Activated CD4-positive, alpha-beta T cell treated with anti-CD3 and anti-CD28 coated beads, Interleukin-2, amount 10 ng/mL, durations not matched to agents 7 days and 5 days (primary cell): ENCODE measurements at regions of chr11 and their contacts with region 1.

Region 1: DNA sequence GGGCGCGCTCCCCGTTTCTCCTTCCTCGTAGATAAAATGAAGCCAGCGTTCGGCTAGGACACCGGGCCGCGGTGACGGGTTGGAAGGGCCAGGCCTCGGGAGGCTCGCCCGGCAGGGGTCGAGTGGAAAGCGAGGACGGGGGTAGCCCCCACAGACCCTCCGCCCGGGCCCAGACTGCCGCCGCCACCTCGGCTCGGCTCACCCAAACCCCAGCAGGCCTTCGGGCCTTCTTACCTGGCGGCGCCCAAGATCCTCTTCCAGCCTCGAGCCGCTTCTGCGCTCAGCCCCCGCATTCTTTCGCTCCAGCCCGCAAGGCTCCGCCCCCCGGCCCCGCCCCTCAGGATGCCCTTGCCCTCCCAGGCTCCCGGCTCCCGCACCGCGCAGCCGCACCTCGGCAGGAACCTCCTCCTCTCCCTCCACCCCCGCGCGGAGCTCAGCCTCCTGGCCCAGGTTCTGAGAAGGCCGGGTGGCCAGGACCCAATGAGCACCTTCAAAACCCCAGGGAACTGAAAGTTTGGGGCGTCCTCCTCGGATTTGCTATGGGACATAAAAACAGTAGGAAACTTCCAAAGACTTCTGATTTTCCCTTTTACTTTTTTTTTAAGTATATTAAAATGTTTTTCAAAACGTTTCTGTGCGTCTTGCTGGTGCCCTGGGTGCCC is at the start of gene CD59:
- DNase-seq: peak; percentile 84
- H3K4me3 Mint-ChIP-seq: peak within 1 kb of the TSS; percentile 83
- H3K27ac Mint-ChIP-seq: peak within 1 kb of the TSS; percentile 87
- H3K4me1 Mint-ChIP-seq: peaks cover 38% of the 10 kb centered on the region
- H3K27me3 Mint-ChIP-seq: peaks cover 15% of the 10 kb centered on the region
- total RNA-seq, gene CD59: 97.2 to 97.4 TPM

Region 2: DNA sequence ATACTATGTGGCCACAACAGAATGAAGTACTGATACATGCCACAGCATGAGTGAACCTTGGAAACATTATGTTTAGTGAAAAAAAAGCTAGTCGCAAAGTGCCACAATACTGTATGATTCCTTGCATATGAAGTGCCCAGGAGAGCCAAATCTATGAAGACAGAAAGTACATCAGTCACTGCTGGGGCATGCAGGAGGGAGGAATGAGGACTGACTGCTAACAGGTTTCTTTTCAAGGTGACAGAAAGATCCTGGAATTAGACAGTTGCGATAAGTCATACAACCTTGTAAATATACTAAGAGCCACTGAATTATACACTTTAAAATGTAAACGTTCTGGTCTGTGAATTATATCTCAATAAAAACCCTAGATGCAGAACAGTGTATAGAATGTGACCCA is 23.8 kb before region 1 on chr11:
- CTCF ChIA-PET with region 1: no interaction called
- POLR2A ChIA-PET with region 1: no interaction called
- DNase-seq: no peak
- H3K4me3 Mint-ChIP-seq: no peak overlapping the region
- H3K27ac Mint-ChIP-seq: no peak overlapping the region
- H3K4me1 Mint-ChIP-seq: peaks cover 1% of the 10 kb centered on the region
- H3K27me3 Mint-ChIP-seq: no peaks in the 10 kb centered on the region

Region 3: GRCh38 chr11:33722579-33723225 is 13.6 kb before region 1 on chr11:
- CTCF ChIA-PET with region 1: no interaction called
- POLR2A ChIA-PET with region 1: no interaction called
- DNase-seq: no peak
- H3K4me3 Mint-ChIP-seq: no peak overlapping the region
- H3K27ac Mint-ChIP-seq: peak overlapping the region; percentile 32
- H3K4me1 Mint-ChIP-seq: peaks cover 48% of the 10 kb centered on the region
- H3K27me3 Mint-ChIP-seq: peaks cover 2% of the 10 kb centered on the region

Region 4: GRCh38 chr11:33790040-33790439 is 53.8 kb after region 1 on chr11:
- CTCF ChIA-PET with region 1: no interaction called
- POLR2A ChIA-PET with region 1: interaction called, 12 read pairs
- DNase-seq: no peak
- H3K4me3 Mint-ChIP-seq: no peak overlapping the region
- H3K27ac Mint-ChIP-seq: no peak overlapping the region
- H3K4me1 Mint-ChIP-seq: peaks cover 6% of the 10 kb centered on the region
- H3K27me3 Mint-ChIP-seq: peaks cover 47% of the 10 kb centered on the region